CD8-positive, alpha-beta memory T cell (primary cell): ENCODE measurements at regions of chr15 and their contacts with region 1.

Region 1: GRCh38 chr15:65881766-65882434 is 12.6 kb downstream of the RAB11A start:
- DNase-seq: peak in 1 of 5 donors; percentile 29
- H3K4me3 ChIP-seq: no peak overlapping the region
- H3K4me3 Mint-ChIP-seq: no peak overlapping the region
- H3K27ac ChIP-seq: no peak overlapping the region
- H3K27ac Mint-ChIP-seq: peak overlapping the region in 3 of 8 donors; percentile 43 to 63 (median 47)
- H3K4me1 ChIP-seq: peaks cover 27% of the 10 kb centered on the region
- H3K4me1 Mint-ChIP-seq: peaks cover 31 to 63% (median 57%) of the 10 kb centered on the region in 3 donors
- H3K27me3 ChIP-seq: no peaks in the 10 kb centered on the region
- H3K27me3 Mint-ChIP-seq: no peaks in the 10 kb centered on the region

Region 2: GRCh38 chr15:65769482-65769881 is 112.4 kb before region 1 on chr15:
- CTCF ChIA-PET with region 1: no interaction called
- POLR2A ChIA-PET with region 1: interaction called, 10 read pairs
- DNase-seq: no peak
- H3K4me3 ChIP-seq: no peak overlapping the region
- H3K4me3 Mint-ChIP-seq: no peak overlapping the region
- H3K27ac ChIP-seq: no peak overlapping the region
- H3K27ac Mint-ChIP-seq: no peak overlapping the region
- H3K4me1 ChIP-seq: peaks cover 33% of the 10 kb centered on the region
- H3K4me1 Mint-ChIP-seq: peaks cover 60 to 81% (median 71%) of the 10 kb centered on the region in 3 donors
- H3K27me3 ChIP-seq: no peaks in the 10 kb centered on the region
- H3K27me3 Mint-ChIP-seq: no peaks in the 10 kb centered on the region

Region 3: DNA sequence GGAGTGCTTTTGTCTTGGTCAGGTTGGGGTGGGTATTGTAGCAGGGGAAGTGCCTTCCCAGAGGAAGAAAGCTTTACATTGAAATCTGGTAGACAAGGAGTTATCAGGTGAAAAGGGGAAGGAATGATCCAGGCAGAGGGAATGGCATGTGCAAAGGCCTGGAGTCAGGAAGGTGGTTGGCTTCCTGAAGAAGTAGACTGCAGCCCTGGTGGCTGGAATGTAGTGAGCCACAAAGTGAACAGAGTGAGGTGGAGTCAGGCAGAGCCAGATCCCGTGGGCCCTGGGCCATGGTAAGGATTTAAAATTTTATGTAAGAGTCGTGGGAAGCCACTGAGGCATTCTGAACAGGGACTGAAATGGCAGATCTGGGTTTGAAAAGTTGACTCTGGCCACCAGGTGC is 45.6 kb after region 1 on chr15:
- CTCF ChIA-PET with region 1: no interaction called
- POLR2A ChIA-PET with region 1: no interaction called
- DNase-seq: no peak
- H3K4me3 ChIP-seq: no peak overlapping the region
- H3K4me3 Mint-ChIP-seq: peak overlapping the region in 1 of 7 donors; percentile 4
- H3K27ac ChIP-seq: no peak overlapping the region
- H3K27ac Mint-ChIP-seq: no peak overlapping the region
- H3K4me1 ChIP-seq: no peaks in the 10 kb centered on the region
- H3K4me1 Mint-ChIP-seq: no peaks in the 10 kb centered on the region
- H3K27me3 ChIP-seq: no peaks in the 10 kb centered on the region
- H3K27me3 Mint-ChIP-seq: no peaks in the 10 kb centered on the region